HCT116 (cell line): ENCODE measurements at regions of chr9 and their contacts with region 1.

Region 1: DNA sequence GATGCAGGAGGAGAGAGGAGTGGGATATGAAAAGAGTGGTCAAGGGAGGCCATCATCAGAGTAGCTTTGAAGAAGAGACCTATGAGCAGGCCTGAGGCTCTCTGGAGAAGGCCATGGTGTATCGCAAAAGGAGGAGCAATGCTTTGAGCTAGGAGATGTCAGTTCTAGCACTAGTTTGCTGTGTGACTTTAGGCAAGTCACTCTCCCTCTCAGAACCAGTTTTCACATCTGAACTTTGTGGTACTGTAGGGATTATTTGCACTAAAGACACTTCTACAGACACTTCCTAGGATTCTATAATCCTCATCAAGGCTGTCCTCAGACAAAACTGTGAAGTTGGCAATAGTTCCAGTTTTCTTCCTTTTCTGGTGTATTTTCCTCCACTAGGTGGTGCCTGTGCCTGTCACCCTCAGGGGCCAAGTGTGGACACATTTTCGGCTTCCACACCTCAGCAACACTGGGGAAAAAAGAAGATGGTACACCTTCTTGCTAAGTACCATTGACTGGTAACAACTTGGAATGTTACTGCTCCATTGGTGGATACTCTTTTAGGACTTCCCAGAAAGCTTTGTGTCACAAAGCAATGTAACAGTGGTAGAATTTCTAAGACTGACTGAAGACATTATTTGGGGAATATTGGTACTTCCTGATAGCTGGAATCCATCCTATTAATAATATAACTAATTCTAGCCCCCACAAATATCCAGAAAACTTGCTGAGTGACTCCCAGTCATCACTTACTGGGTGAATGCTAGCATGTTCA is 9.9 kb downstream of the PAPPA start:
- DNase-seq: no peak
- ATAC-seq: peak; percentile 57
- H3K4me3 ChIP-seq: no peak overlapping the region
- H3K27ac ChIP-seq: no peak overlapping the region
- H3K4me1 ChIP-seq: no peaks in the 10 kb centered on the region
- H3K27me3 ChIP-seq: peaks cover 36% of the 10 kb centered on the region
- CTCF ChIP-seq: peak; percentile 46 to 63 (median 60); a peak in 5 of 6 replicates
- POLR2A ChIP-seq: no peak
- RAD21 ChIP-seq: peak; percentile 65

Region 2: GRCh38 chr9:115694014-115694413 is 469.5 kb before region 1 on chr9:
- CTCF ChIA-PET with region 1: no interaction called
- POLR2A ChIA-PET with region 1: no interaction called
- RAD21 ChIA-PET with region 1: no interaction called
- intact Hi-C with region 1: loop called (anchors 10 kb)
- DNase-seq: no peak
- ATAC-seq: peak; percentile 63; the same call in 1 of the 2 replicates
- H3K4me3 ChIP-seq: no peak overlapping the region
- H3K27ac ChIP-seq: no peak overlapping the region
- H3K4me1 ChIP-seq: peaks cover 0 to 9% of the 10 kb centered on the region in 2 experiments; a peak in 1 of 4 replicates
- H3K27me3 ChIP-seq: peaks cover 23% of the 10 kb centered on the region; the same call in 1 of the 2 replicates
- CTCF ChIP-seq: peak in 2 of 3 experiments; percentile 25 to 43; a peak in 4 of 6 replicates
- POLR2A ChIP-seq: no peak
- RAD21 ChIP-seq: peak; percentile 68